Heart right ventricle (tissue), 16 donors: ENCODE measurements at regions of chr17 and their contacts with region 1.

Region 1: GRCh38 chr17:73532421-73532901 is 111.8 kb downstream of the SDK2 start:
- DNase-seq: no peak
- ATAC-seq: peak in 1 of 8 donors; percentile 17
- H3K4me3 ChIP-seq: no peak overlapping the region
- H3K27ac ChIP-seq: no peak overlapping the region
- H3K4me1 ChIP-seq: peaks cover 0 to 10% (median 0%) of the 10 kb centered on the region in 9 donors
- H3K27me3 ChIP-seq: no peaks in the 10 kb centered on the region
- CTCF ChIP-seq: no peak

Region 2: DNA sequence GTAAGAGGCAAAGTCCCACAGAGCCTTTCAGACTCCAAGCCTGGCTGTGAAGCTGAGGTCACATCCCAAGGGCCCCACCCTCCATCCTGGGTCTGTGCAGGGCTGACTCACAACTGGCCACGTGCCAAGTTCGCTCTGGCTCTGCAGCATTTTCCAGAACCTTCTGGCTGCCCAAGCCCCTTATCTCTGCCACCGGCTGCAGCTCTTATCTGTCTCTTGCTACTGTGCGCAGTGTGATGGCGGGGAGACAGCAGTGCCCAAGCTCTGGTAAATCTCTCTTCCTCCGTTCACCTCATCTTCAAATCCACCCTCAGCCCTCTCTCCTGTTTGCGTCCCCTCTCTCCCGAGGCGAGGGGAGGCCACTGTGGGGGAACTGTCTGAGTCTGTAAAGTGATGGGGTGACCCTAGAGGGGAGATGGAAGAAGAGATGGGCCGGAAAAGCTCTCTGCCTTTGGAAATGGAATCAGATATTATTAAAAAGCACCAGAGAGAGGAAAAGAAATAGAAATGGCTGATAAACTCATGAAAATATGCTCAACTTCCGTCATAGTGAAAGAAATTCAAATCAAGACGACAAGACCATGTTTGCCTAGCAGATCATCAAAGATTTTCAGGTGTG is 58.0 kb before region 1 on chr17:
- intact Hi-C with region 1: loop called in 4 of 10 experiments (anchors 2 to 10 kb)
- DNase-seq: peak; percentile 82 to 84
- ATAC-seq: peak; percentile 85 to 94 (median 90)
- H3K4me3 ChIP-seq: no peak overlapping the region
- H3K27ac ChIP-seq: peak overlapping the region in 6 of 10 donors; percentile 3 to 81 (median 31)
- H3K4me1 ChIP-seq: peaks cover 0 to 38% (median 15%) of the 10 kb centered on the region in 9 donors
- H3K27me3 ChIP-seq: peaks cover 0 to 5% (median 0%) of the 10 kb centered on the region in 7 donors
- CTCF ChIP-seq: no peak

Region 3: DNA sequence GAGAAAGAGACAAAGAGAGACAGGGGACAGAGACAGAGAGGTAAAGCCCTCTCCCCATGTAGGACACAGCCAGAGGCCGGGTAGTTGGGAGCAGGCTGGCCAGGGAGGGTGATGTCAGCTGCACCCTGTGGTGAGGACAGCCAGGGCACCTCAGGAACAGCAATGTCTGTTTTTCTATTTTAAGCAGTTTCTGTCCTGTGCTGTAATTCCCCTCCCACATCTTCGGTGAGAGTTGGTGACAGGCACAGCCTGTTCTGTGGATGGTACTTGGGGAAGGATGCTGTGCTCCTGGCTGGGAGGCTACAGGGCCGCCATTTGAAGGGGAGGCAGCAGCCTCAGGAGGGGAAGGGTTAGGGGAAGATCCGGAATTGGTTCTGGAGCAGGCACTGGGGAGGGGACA is 51.7 kb before region 1 on chr17:
- intact Hi-C with region 1: loop called in 5 of 10 experiments (anchors 2 to 10 kb)
- DNase-seq: peak; percentile 48 to 55
- ATAC-seq: peak; percentile 80 to 93 (median 88)
- H3K4me3 ChIP-seq: no peak overlapping the region
- H3K27ac ChIP-seq: peak overlapping the region in 5 of 10 donors; percentile 22 to 77 (median 29)
- H3K4me1 ChIP-seq: peaks cover 0 to 37% (median 7%) of the 10 kb centered on the region in 9 donors
- H3K27me3 ChIP-seq: peaks cover 0 to 5% (median 0%) of the 10 kb centered on the region in 7 donors
- CTCF ChIP-seq: no peak

Region 4: DNA sequence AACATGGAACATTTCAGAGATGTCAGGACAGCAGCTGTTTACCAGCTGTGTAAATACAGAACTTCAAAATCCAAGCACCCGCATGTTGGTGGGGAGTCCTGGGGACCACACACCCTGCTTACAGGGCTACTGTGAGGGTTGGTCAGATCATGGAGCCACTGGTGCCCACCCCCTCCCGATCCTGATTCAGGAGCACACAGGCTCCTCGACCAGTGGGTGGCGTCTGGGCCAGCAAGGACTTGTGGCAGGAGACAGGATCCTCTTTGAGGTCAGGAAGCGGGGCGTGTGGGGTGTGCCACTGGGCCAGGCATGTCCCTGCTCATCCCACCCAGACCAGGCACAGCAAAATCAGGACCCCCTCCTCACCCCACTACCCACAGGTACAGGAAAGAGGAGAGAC is 28.2 kb after region 1 on chr17:
- intact Hi-C with region 1: no loop called
- DNase-seq: no peak
- ATAC-seq: peak in 1 of 8 donors; percentile 12
- H3K4me3 ChIP-seq: no peak overlapping the region
- H3K27ac ChIP-seq: no peak overlapping the region
- H3K4me1 ChIP-seq: no peaks in the 10 kb centered on the region
- H3K27me3 ChIP-seq: peaks cover 0 to 5% (median 0%) of the 10 kb centered on the region in 7 donors
- CTCF ChIP-seq: no peak

Region 5: GRCh38 chr17:73939806-73940493 is 407.5 kb after region 1 on chr17:
- intact Hi-C with region 1: no loop called
- DNase-seq: no peak
- ATAC-seq: no peak
- H3K4me3 ChIP-seq: no peak overlapping the region
- H3K27ac ChIP-seq: no peak overlapping the region
- H3K4me1 ChIP-seq: no peaks in the 10 kb centered on the region
- H3K27me3 ChIP-seq: peaks cover 0 to 47% (median 18%) of the 10 kb centered on the region in 7 donors
- CTCF ChIP-seq: no peak